ENCODE measurements at regions of chr9 and their contacts with region 1.

Region 1: GRCh38 chr9:72037571-72037970 is 22.8 kb downstream of the C9orf57 start:
- DNase-seq: no peak
- H3K4me3 ChIP-seq: no peak overlapping the region
- H3K27ac ChIP-seq: no peak overlapping the region
- H3K4me1 ChIP-seq: peaks cover 0 to 10% (median 0%) of the 10 kb centered on the region in 4 donors
- H3K27me3 ChIP-seq: no peaks in the 10 kb centered on the region
- CTCF ChIP-seq: no peak

Region 2: DNA sequence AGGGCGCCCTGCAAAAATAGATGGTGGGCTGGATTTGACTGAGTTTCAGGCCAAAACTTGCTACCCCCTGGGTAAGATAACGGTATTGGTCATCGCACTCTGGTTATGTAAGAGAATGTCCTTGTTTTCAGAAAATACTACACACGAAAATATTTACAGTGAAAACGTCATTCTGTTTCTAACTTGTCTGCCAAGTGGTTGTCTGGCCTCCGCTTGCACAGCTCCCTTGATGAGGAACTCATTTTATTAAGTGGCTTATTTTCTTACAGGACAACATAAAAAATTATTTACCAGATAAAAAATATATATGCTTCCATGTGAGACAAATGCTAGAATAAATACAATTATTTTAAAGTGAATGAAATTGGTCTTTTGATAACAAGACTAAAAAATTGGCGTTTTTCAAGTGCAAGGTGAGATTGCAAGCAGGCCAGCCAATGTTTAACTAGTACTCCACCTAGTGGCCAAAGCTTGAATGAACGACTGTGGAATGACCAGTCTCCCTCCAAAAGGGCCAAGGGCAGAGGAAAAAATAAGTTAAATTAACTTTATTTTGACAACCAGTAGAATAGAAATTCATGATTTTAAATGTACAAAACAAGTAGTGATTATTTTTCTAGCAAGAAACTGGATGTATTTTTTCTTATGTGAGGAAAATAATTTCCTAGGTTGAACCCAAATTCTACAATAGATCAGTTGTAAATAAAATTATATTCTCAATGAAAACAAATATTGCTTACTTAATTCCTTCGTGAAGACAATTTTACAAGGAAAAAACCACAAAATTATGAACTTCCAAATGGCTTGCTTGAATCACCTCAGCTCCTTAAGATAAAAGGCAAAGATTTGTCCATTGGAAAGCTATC is 234.3 kb after region 1 on chr9:
- intact Hi-C with region 1: loop called (anchors 2 kb)
- DNase-seq: peak in 1 of 2 donors; percentile 37
- H3K4me3 ChIP-seq: no peak overlapping the region
- H3K27ac ChIP-seq: no peak overlapping the region
- H3K4me1 ChIP-seq: no peaks in the 10 kb centered on the region
- H3K27me3 ChIP-seq: no peaks in the 10 kb centered on the region
- CTCF ChIP-seq: peak; percentile 74 to 81